Activated T-helper 2 cell treated with anti-CD3 and anti-CD28 coated beads, Interferon-gamma antibody, Interleukin-2, Interleukin-4, amounts not matched to agents 10 μg/mL and 5 μg/mL and 100 μg/mL, durations not matched to agents 14 hours and 24 hours and 36 hours (primary cell): ENCODE measurements at regions of chr14 and their contacts with region 1.

Region 1: GRCh38 chr14:68487805-68488590 is 304.9 kb downstream of the ZFP36L1 start:
- DNase-seq: no peak
- H3K4me3 Mint-ChIP-seq: no peak overlapping the region
- H3K27ac Mint-ChIP-seq: peak overlapping the region; percentile 31
- H3K4me1 Mint-ChIP-seq: peaks cover 28% of the 10 kb centered on the region
- H3K27me3 Mint-ChIP-seq: no peaks in the 10 kb centered on the region

Region 2: GRCh38 chr14:68283378-68284123 is 204.4 kb before region 1 on chr14:
- intact Hi-C with region 1: loop called (anchors 5 kb)
- DNase-seq: peak; percentile 33
- H3K4me3 Mint-ChIP-seq: no peak overlapping the region
- H3K27ac Mint-ChIP-seq: peak overlapping the region; percentile 59
- H3K4me1 Mint-ChIP-seq: peaks cover 55% of the 10 kb centered on the region
- H3K27me3 Mint-ChIP-seq: no peaks in the 10 kb centered on the region

Region 3: DNA sequence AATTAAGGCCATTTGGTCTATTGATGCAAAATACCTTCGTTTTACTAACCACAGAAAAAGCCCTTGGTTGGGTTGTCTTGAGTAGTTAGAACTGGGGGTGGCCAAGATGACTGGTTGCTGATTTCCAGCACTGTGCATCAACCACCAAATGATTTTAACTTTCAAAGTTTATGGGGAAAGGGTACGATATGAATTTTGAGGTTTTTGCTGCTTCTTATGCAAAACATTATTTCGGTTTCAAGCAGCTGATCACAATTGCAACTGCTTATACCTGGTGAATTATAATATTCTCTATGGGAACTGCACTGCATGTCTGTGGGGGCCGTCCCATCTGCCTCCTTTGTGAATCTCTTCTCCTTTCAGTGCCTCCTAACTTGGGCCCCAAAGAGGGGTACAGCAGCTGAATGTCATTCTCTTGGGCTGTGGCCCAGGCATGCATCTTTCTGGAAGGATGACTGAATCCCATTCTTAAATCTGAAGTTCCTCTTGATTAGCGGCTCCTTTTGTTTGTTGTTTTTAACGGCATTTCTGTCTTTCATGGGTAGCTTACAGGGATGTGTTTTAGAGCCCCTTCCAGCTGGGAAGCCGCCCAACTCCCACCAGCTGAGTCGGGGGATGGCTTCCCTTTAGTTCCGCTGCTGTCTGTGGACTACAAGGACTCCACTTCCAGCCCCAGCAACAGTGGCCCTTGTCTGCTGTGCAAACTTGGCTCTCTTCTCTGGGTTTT is 175.0 kb before region 1 on chr14:
- intact Hi-C with region 1: loop called (anchors 10 kb)
- DNase-seq: no peak
- H3K4me3 Mint-ChIP-seq: no peak overlapping the region
- H3K27ac Mint-ChIP-seq: no peak overlapping the region
- H3K4me1 Mint-ChIP-seq: peaks cover 26% of the 10 kb centered on the region
- H3K27me3 Mint-ChIP-seq: no peaks in the 10 kb centered on the region

Region 4: DNA sequence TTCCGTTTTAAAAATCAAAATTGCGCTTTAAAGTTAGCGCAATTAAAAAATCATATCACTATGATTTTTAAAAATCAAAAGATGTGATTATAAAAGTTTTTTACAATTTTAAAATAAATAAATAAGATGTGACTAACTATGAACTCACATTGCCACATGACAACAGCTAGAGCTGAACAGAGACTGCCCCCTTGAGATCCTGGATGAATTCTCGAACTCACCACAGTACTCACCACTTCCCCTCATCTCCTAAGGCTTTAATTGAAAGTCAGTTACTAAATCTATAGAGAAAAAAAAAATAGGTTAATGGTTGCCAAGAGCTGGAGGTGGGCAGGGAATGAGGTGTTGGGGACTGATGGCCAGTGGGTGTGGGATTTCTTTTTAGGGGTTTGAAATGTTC is 79.3 kb before region 1 on chr14:
- intact Hi-C with region 1: loop called (anchors 10 kb)
- DNase-seq: no peak
- H3K4me3 Mint-ChIP-seq: no peak overlapping the region
- H3K27ac Mint-ChIP-seq: no peak overlapping the region
- H3K4me1 Mint-ChIP-seq: peaks cover 19% of the 10 kb centered on the region
- H3K27me3 Mint-ChIP-seq: no peaks in the 10 kb centered on the region

Region 5: GRCh38 chr14:68506021-68506644 is 18.1 kb after region 1 on chr14:
- intact Hi-C with region 1: no loop called
- DNase-seq: no peak
- H3K4me3 Mint-ChIP-seq: no peak overlapping the region
- H3K27ac Mint-ChIP-seq: no peak overlapping the region
- H3K4me1 Mint-ChIP-seq: peaks cover 20% of the 10 kb centered on the region
- H3K27me3 Mint-ChIP-seq: no peaks in the 10 kb centered on the region